GM12878 (cell line): ENCODE measurements at regions of chr1 and their contacts with region 1.

Region 1: GRCh38 chr1:29202584-29203340 is 21.1 kb upstream of the SRSF4 start:
- DNase-seq: peak; percentile 47
- ATAC-seq: peak; percentile 100
- H3K4me3 ChIP-seq: no peak overlapping the region
- H3K27ac ChIP-seq: no peak overlapping the region
- H3K4me1 ChIP-seq: peaks cover 3% of the 10 kb centered on the region; the same call in 1 of the 2 replicates
- H3K27me3 ChIP-seq: no peaks in the 10 kb centered on the region
- CTCF ChIP-seq: peak; percentile 93 to 99 (median 97); a peak in 5 of 6 replicates
- EP300 ChIP-seq: no peak
- POLR2A ChIP-seq: no peak
- RAD21 ChIP-seq: peak; percentile 96

Region 2: DNA sequence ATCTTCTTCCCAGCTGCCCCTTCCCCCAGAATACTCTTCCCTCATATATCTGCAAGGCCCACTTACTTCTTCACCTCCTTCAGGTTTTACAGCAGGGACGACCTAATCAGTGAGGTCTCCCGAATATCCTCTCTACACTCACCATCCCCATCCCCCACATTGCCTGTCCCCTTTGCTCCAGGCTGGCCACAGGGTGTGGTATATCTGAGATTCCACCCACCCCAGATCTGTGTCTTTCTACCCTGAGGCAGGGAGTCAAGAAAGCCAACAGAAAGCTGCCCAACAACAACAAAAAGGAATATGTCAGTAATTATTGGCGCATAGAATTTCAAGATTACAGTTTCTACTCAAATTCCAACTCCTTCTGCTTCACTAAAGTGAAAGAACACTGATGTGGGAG is 420.8 kb before region 1 on chr1:
- CTCF ChIA-PET with region 1: interaction called, 18 read pairs
- POLR2A ChIA-PET with region 1: interaction called, 3 read pairs
- RAD21 ChIA-PET with region 1: interaction called, 6 read pairs
- SMC1A ChIA-PET with region 1: interaction called, 6 read pairs
- in situ Hi-C with region 1: loop called (anchors 5 kb)
- intact Hi-C with region 1: loop called (anchors 10 kb)
- DNase-seq: no peak
- ATAC-seq: no peak
- H3K4me3 ChIP-seq: no peak overlapping the region
- H3K27ac ChIP-seq: no peak overlapping the region
- H3K4me1 ChIP-seq: no peaks in the 10 kb centered on the region
- H3K27me3 ChIP-seq: no peaks in the 10 kb centered on the region
- CTCF ChIP-seq: no peak
- EP300 ChIP-seq: no peak
- POLR2A ChIP-seq: no peak
- RAD21 ChIP-seq: no peak

Region 3: DNA sequence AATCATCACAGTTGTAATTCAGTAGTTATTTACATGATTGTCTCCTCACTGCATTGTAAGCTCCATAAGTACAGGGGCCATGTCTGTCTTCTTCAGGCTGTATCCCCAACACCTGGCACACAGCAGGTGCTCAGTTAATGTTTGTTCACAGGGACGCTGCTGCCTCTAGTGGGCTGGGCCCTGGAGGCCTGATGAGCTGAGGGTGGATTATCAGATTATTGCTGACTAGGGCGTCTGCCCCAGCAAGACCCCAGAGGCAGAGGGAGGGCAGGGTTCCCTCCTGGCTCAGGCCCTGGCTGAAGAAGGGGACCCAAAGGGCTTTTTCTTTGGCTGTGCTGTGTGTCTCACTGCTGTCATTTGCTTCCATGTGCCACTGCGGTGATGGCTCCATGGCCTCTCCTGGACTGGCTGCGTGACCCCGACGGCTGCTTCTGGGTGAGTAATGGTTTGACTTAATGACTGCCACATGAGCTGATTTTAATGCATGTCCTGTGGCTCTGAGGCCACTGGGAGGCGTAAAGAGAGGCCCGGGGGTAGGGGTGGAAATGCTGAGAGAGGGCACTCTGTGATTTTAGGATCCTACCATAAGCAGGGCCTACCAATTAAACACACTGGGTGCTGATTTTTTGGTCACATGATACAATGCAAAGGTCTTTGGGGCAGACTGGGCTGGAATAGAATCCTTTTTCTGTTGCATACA is 309.2 kb before region 1 on chr1:
- CTCF ChIA-PET with region 1: interaction called, 12 read pairs
- POLR2A ChIA-PET with region 1: no interaction called
- RAD21 ChIA-PET with region 1: no interaction called
- SMC1A ChIA-PET with region 1: interaction called, 3 read pairs
- in situ Hi-C with region 1: no loop called
- intact Hi-C with region 1: no loop called
- DNase-seq: no peak
- ATAC-seq: peak; percentile 63
- H3K4me3 ChIP-seq: no peak overlapping the region
- H3K27ac ChIP-seq: no peak overlapping the region
- H3K4me1 ChIP-seq: no peaks in the 10 kb centered on the region
- H3K27me3 ChIP-seq: no peaks in the 10 kb centered on the region
- CTCF ChIP-seq: peak; percentile 27 to 39 (median 38); a peak in 5 of 6 replicates
- EP300 ChIP-seq: no peak
- POLR2A ChIP-seq: no peak
- RAD21 ChIP-seq: peak; percentile 59

Region 4: GRCh38 chr1:29117381-29117780 is 85.4 kb before region 1 on chr1:
- CTCF ChIA-PET with region 1: interaction called, 19 read pairs
- POLR2A ChIA-PET with region 1: no interaction called
- RAD21 ChIA-PET with region 1: interaction called, 3 read pairs
- SMC1A ChIA-PET with region 1: interaction called, 7 read pairs
- in situ Hi-C with region 1: no loop called
- intact Hi-C with region 1: loop called (anchors 5 kb)
- DNase-seq: no peak
- ATAC-seq: no peak
- H3K4me3 ChIP-seq: no peak overlapping the region
- H3K27ac ChIP-seq: no peak overlapping the region
- H3K4me1 ChIP-seq: no peaks in the 10 kb centered on the region
- H3K27me3 ChIP-seq: peaks cover 1 to 4% of the 10 kb centered on the region in 2 experiments; a peak in 3 of 4 replicates
- CTCF ChIP-seq: no peak; a peak in 1 of 6 replicates
- EP300 ChIP-seq: no peak
- POLR2A ChIP-seq: no peak
- RAD21 ChIP-seq: no peak

Region 5: GRCh38 chr1:29156543-29157268 is 46.1 kb before region 1 on chr1:
- CTCF ChIA-PET with region 1: interaction called, 10 read pairs
- POLR2A ChIA-PET with region 1: no interaction called
- RAD21 ChIA-PET with region 1: interaction called, 4 read pairs
- SMC1A ChIA-PET with region 1: interaction called, 7 read pairs
- in situ Hi-C with region 1: no loop called
- intact Hi-C with region 1: no loop called
- DNase-seq: no peak
- ATAC-seq: no peak
- H3K4me3 ChIP-seq: no peak overlapping the region
- H3K27ac ChIP-seq: no peak overlapping the region
- H3K4me1 ChIP-seq: no peaks in the 10 kb centered on the region
- H3K27me3 ChIP-seq: no peaks in the 10 kb centered on the region
- CTCF ChIP-seq: no peak
- EP300 ChIP-seq: no peak
- POLR2A ChIP-seq: no peak
- RAD21 ChIP-seq: no peak

Region 6: GRCh38 chr1:29181413-29182225 is 21.1 kb before region 1 on chr1 and contains the start of gene SRSF4:
- CTCF ChIA-PET with region 1: interaction called, 44 read pairs
- POLR2A ChIA-PET with region 1: interaction called, 10 read pairs
- RAD21 ChIA-PET with region 1: interaction called, 34 read pairs
- SMC1A ChIA-PET with region 1: interaction called, 47 read pairs
- in situ Hi-C with region 1: no loop called
- intact Hi-C with region 1: no loop called
- DNase-seq: peak; percentile 94
- ATAC-seq: peak; percentile 93
- H3K4me3 ChIP-seq: peak within 1 kb of the TSS; percentile 97
- H3K27ac ChIP-seq: peak within 1 kb of the TSS; percentile 99
- H3K4me1 ChIP-seq: no peaks in the 10 kb centered on the region; the same call in none of the 2 replicates
- H3K27me3 ChIP-seq: no peaks in the 10 kb centered on the region
- CTCF ChIP-seq: peak; percentile 55 to 95 (median 63); a peak in 4 of 6 replicates
- EP300 ChIP-seq: no peak
- POLR2A ChIP-seq: peak; percentile 85
- RAD21 ChIP-seq: no peak
- polyA plus RNA-seq, gene SRSF4: 17.2 to 26.4 TPM

Region 7: DNA sequence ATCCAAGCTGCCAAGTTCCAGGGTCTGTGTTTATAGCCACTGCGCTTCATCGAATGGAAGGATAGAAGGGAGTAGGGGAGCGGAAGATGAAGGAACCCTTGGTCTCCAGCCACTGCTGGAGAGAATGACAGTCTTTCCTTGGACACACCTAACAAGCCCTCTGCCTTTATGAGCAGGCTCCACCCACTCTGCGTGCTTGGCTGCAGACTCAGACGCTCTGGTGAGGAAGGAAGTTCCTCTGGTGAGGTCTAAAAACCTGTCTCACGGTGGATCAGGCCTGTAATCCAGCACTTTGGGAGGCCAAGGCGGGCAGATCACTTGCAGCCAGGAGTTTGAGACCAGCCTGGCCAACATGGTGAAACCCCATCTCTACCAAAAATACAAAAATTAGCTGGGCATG is 1465.3 kb after region 1 on chr1:
- CTCF ChIA-PET with region 1: no interaction called
- POLR2A ChIA-PET with region 1: no interaction called
- RAD21 ChIA-PET with region 1: no interaction called
- SMC1A ChIA-PET with region 1: no interaction called
- in situ Hi-C with region 1: no loop called
- intact Hi-C with region 1: no loop called
- DNase-seq: no peak
- ATAC-seq: no peak
- H3K4me3 ChIP-seq: no peak overlapping the region
- H3K27ac ChIP-seq: no peak overlapping the region
- H3K4me1 ChIP-seq: no peaks in the 10 kb centered on the region
- H3K27me3 ChIP-seq: no peaks in the 10 kb centered on the region
- CTCF ChIP-seq: no peak
- EP300 ChIP-seq: no peak
- POLR2A ChIP-seq: no peak
- RAD21 ChIP-seq: no peak